IMR-90 (cell line): ENCODE measurements at regions of chr14 and their contacts with region 1.

Region 1: DNA sequence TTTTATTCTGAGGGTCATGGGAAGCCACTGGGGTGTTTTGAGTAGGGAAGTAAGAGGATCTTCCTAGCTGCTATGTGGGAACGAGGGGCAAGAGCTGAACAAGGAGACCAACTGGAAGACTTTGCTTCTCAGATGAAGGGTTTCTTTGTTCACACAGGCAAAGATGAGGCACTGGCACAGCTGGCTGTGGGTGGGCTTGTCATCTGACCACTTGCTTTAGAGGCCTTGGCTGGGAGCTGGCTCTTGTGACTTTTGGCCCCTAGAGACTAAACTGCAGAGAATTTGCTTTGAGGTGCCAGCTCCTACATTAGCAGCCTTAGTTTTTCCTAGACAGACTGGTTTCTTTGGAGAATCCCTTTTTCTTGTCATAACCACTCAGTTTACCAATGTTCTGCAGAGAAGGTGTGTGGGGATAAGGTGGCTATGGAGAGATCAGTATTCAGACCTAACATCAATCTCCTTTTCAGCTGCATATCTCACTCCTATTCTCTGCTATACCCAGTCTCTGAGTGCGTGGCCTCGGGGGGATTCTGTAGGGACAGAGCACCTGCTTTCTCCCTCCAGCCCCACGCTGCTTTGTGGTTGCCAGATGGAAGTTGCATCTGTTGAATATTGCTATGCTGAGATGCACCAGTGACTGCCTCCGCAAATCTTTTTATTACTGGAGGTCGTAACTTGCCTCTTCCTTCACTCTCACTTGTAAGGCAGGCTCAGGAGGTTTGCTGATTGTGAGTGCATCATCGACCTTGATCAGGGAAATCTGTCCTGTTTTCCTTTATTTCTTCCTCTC is 12.7 kb downstream of the PPP2R5C start:
- DNase-seq: no peak
- ATAC-seq: no peak
- H3K4me3 ChIP-seq: no peak overlapping the region
- H3K27ac ChIP-seq: no peak overlapping the region
- H3K4me1 ChIP-seq: no peaks in the 10 kb centered on the region; the same call in 1 of the 2 replicates
- H3K27me3 ChIP-seq: peaks cover 3% of the 10 kb centered on the region; the same call in 1 of the 2 replicates
- CTCF ChIP-seq: no peak
- POLR2A ChIP-seq: no peak
- RAD21 ChIP-seq: no peak

Region 2: GRCh38 chr14:101761032-101761880 is 12.9 kb before region 1 on chr14 and contains the start of gene PPP2R5C:
- CTCF ChIA-PET with region 1: interaction called, 10 read pairs
- POLR2A ChIA-PET with region 1: no interaction called
- dilution Hi-C with region 1: no loop called
- in situ Hi-C with region 1: no loop called
- intact Hi-C with region 1: no loop called
- DNase-seq: peak; percentile 82
- ATAC-seq: peak; percentile 78
- H3K4me3 ChIP-seq: peak within 1 kb of the TSS; percentile 99
- H3K27ac ChIP-seq: peak within 1 kb of the TSS; percentile 65
- H3K4me1 ChIP-seq: no peaks in the 10 kb centered on the region
- H3K27me3 ChIP-seq: peaks cover 16% of the 10 kb centered on the region
- CTCF ChIP-seq: no peak
- POLR2A ChIP-seq: 0 out of 2 replicates have a peak, but pooled peaks have one; percentile 32
- RAD21 ChIP-seq: no peak
- total RNA-seq, gene PPP2R5C: 78.7 and 107 TPM in 2 replicates

Region 3: DNA sequence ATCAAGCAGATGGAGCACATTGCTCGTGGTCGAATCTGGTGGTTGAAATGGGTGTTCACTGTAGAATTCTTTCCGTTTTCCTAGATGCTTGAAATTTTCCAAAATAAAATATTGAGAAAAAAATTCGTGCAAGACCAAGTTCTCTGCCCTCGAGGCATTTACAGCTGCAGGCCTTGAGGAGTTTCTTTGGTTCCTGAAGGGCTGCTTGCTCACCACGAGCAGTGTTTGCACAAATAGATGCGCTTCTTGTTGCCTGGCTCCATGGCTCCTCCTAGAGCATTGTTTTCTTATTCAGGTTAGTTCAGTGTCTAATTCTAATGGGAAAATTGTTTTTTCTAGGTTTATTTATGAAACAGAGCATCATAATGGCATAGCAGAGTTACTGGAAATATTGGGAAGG is 115.7 kb after region 1 on chr14:
- CTCF ChIA-PET with region 1: no interaction called
- POLR2A ChIA-PET with region 1: interaction called, 4 read pairs
- dilution Hi-C with region 1: no loop called
- in situ Hi-C with region 1: no loop called
- intact Hi-C with region 1: loop called (anchors 10 kb)
- DNase-seq: no peak
- ATAC-seq: no peak
- H3K4me3 ChIP-seq: no peak overlapping the region
- H3K27ac ChIP-seq: no peak overlapping the region
- H3K4me1 ChIP-seq: no peaks in the 10 kb centered on the region; the same call in 1 of the 2 replicates
- H3K27me3 ChIP-seq: no peaks in the 10 kb centered on the region
- CTCF ChIP-seq: no peak
- POLR2A ChIP-seq: no peak
- RAD21 ChIP-seq: no peak

Region 4: DNA sequence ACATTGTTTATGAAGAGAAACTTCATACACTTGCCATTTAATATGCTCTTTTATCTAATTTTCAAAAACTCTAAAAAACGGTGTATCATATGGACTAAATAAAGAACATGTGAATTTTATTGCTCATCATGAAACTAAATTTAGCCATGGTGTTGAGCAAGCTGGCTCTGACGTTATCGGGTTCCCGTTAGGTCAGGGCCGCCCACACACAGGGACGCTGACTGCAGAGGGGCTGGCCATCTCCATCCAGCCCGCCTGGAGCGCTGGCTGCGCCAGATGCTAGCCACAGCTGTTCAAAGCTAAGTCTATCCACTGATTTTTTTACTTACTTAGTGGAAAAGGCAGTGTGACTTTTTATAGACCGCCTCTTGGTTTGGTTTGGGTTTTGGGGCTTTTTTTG is 153.7 kb after region 1 on chr14:
- CTCF ChIA-PET with region 1: no interaction called
- POLR2A ChIA-PET with region 1: no interaction called
- dilution Hi-C with region 1: no loop called
- in situ Hi-C with region 1: no loop called
- intact Hi-C with region 1: loop called (anchors 10 kb)
- DNase-seq: peak; percentile 98
- ATAC-seq: peak; percentile 99
- H3K4me3 ChIP-seq: no peak overlapping the region
- H3K27ac ChIP-seq: no peak overlapping the region
- H3K4me1 ChIP-seq: peaks cover 4% of the 10 kb centered on the region
- H3K27me3 ChIP-seq: no peaks in the 10 kb centered on the region
- CTCF ChIP-seq: no peak
- POLR2A ChIP-seq: no peak; the same call in 1 of the 2 replicates
- RAD21 ChIP-seq: no peak

Region 5: DNA sequence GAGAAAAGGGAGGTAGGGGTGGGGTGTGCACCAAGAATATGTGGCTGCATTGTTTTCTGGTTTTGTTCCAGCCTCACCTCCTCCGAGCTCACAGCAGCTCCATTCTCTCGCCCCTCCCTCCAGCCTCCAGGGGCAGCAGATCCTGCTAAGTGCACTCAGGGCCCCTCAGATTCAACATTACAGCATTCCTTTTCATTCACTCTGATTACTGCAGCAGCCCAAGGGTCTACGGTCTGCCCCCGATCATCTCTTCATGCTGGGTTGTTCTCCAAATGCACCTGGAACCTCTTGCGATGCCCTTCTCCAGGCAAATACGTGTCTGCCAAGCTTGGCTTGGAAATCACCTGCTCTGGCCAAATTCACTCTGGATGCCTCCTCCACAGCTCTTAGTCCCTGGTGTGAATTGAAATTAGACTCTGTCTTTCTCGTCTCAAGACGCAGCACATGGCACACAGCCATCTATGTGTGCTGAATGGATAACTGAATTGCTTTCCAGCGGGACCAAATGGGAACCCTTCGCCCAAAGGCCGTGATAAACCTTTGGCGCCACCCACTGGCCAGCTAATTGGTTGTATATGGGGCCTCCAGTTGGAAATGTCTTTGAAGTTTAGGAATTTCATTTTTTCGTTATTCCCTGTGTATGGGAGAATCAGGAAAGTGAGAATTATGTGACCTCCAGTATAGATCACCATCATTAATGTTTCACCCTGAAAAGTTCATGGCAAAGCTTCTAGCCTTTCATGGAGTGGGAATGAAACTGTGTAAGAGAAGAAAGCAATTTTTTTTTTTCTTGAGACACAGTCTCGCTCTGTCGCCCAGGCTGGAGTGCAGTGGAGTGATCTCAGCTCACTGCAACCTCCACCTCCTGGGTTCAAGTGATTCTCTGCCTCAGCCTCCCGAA is 322.3 kb after region 1 on chr14:
- CTCF ChIA-PET with region 1: interaction called, 5 read pairs
- POLR2A ChIA-PET with region 1: no interaction called
- dilution Hi-C with region 1: no loop called
- in situ Hi-C with region 1: no loop called
- intact Hi-C with region 1: loop called (anchors 1 kb)
- DNase-seq: peak; percentile 74
- ATAC-seq: peak; percentile 86
- H3K4me3 ChIP-seq: no peak overlapping the region
- H3K27ac ChIP-seq: no peak overlapping the region
- H3K4me1 ChIP-seq: peaks cover 12% of the 10 kb centered on the region
- H3K27me3 ChIP-seq: no peaks in the 10 kb centered on the region
- CTCF ChIP-seq: peak; percentile 92
- POLR2A ChIP-seq: no peak
- RAD21 ChIP-seq: peak; percentile 91

Region 6: DNA sequence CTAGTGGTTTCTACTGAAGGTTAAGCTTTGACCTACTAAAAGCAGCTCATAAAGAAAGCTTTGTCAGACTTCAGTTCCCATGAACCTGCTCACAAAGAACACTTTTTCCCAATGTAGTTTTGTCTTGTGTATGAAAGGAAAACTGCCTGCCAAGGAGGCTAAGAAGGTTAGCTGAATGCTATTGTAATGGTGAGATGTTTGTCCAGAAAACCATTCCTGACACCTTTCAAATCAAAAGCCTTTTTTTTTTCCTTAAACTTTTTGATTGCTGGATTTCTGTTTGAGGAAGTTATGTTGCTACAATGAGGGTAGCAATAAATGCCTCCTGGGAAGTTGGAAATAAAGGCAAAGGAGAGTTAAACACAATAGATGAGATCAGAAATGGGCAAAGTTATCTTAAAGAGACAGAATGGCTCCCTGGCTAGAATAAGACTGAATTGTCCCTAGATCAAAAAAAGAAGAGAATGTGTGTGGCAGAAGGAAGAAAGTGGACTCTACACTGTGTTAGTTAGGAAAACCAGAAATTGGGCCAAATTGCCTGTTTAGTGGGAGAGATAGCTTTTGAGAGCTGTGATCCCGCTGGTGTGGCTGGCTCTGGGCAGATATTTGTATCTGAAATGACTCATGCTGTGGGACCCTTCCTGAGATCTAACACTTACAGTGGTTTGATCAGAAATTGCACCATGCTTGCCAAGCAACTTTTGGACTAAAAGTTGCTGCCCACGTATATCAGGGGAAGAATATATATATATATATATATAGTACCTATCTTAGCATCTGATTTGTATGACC is 616.1 kb after region 1 on chr14:
- CTCF ChIA-PET with region 1: no interaction called
- POLR2A ChIA-PET with region 1: no interaction called
- dilution Hi-C with region 1: no loop called
- in situ Hi-C with region 1: no loop called
- intact Hi-C with region 1: no loop called
- DNase-seq: peak; percentile 57
- ATAC-seq: peak; percentile 10
- H3K4me3 ChIP-seq: no peak overlapping the region
- H3K27ac ChIP-seq: no peak overlapping the region
- H3K4me1 ChIP-seq: peaks cover 10% of the 10 kb centered on the region
- H3K27me3 ChIP-seq: no peaks in the 10 kb centered on the region
- CTCF ChIP-seq: no peak
- POLR2A ChIP-seq: no peak
- RAD21 ChIP-seq: no peak